A549 (cell line): ENCODE measurements at regions of chr6 and their contacts with region 1.

Region 1: GRCh38 chr6:87822011-87822410 is 120.0 kb upstream of the AKIRIN2 start:
- DNase-seq: no peak
- ATAC-seq: no peak
- H3K4me3 ChIP-seq: no peak overlapping the region
- H3K27ac ChIP-seq: no peak overlapping the region
- H3K4me1 ChIP-seq: peaks cover 15% of the 10 kb centered on the region
- CTCF ChIP-seq: no peak
- EP300 ChIP-seq: no peak
- POLR2A ChIP-seq: no peak
- RAD21 ChIP-seq: no peak

Region 2: DNA sequence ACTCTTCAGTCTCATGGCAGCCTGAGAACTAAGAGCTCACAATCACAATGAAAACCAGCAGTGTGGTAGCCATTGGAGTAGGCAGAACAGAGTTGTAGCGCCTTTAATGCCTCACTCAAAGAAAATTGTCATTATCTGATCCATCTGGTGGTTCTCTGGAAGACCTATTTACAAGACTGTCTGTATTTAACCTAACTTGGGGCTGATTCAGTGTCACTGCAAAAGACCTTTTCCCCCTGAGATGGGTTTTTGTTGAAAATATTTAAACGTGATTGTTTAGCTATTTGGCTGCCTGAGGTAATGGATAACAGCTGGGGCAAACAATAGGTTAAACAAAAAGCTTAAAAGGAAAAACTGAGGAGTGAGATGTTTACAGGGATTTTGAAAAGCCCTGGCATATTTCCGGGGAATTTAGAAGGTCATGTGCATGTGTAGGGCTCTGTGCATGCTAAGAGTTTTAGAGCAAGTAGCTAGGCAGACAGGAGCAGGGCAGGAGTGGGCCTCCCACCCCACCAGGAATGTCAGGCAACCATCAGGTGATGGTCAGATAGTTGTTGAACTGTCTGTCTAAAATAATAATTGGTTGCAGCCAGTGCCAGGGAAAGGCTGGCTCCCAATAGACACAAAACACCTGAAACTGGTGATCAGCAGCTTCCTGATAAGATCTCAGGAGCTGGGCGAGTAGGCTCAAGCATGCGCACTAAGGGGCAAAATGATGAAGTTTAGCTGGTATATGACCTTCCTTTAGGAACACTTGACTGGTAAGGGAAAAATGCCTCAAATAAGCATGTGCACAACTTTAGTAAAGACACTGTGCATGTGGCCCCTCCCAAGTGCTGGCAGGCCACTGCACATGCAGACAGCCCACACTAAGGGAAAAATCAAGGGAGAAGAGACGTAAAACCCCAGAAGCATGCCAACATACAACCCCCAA is 49.1 kb before region 1 on chr6:
- CTCF ChIA-PET with region 1: no interaction called
- POLR2A ChIA-PET with region 1: no interaction called
- DNase-seq: peak in 1 of 2 experiments; percentile 40
- ATAC-seq: peak in 1 of 2 experiments; percentile 72; a peak in 4 of 6 replicates
- H3K4me3 ChIP-seq: no peak overlapping the region
- H3K27ac ChIP-seq: peak overlapping the region; percentile 56 to 79
- H3K4me1 ChIP-seq: peaks cover 20% of the 10 kb centered on the region
- CTCF ChIP-seq: no peak
- EP300 ChIP-seq: no peak
- POLR2A ChIP-seq: no peak
- RAD21 ChIP-seq: no peak

Region 3: DNA sequence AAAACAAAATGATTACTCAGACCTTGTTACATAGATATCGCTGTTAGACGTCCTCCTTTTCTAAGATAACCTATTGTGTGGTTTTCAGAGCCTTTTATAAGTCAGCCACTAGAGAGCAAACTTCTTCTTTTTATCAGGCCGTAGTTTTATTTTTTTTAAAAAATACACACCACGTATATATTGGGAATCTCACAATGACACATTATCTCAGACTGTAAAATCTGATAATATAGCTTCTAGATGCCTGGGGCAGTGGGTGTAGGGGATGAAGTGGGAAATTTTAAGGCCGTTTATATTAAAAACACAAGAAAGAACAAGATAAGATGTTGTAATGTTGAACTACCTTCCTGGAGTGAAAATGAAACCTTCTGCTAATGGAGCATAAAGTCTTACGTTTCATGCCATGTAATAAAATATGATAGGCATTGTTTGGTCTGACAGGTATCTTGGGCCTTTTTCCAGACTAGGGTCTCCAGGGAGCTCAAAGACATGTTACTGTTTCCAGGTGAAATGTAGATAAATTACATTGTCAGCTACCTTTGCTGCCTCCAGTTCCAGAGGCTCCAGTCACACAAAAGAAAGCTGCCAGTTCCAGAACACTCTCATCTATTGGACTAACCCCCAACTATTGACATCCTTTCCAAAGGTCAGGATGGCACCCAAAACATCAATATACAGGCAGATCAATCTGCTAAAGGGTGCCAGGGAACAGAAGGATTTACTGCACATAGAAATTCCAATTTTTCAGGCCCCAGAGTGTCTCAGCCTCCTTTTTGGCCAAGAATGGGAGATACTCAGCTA is 10.2 kb after region 1 on chr6:
- CTCF ChIA-PET with region 1: interaction called, 11 read pairs
- POLR2A ChIA-PET with region 1: no interaction called
- DNase-seq: peak in 1 of 2 experiments; percentile 23
- ATAC-seq: peak; percentile 50 to 75; a peak in 4 of 6 replicates
- H3K4me3 ChIP-seq: peak overlapping the region; percentile 24; the same call in 2 of the 3 replicates
- H3K27ac ChIP-seq: peak overlapping the region; percentile 45 to 65
- H3K4me1 ChIP-seq: no peaks in the 10 kb centered on the region
- CTCF ChIP-seq: peak; percentile 50
- EP300 ChIP-seq: no peak
- POLR2A ChIP-seq: no peak
- RAD21 ChIP-seq: peak; percentile 52 to 61; a peak in 4 of 5 replicates